Mucosa of descending colon (tissue), 3 donors: ENCODE measurements at regions of chr12 and their contacts with region 1.

Region 1: DNA sequence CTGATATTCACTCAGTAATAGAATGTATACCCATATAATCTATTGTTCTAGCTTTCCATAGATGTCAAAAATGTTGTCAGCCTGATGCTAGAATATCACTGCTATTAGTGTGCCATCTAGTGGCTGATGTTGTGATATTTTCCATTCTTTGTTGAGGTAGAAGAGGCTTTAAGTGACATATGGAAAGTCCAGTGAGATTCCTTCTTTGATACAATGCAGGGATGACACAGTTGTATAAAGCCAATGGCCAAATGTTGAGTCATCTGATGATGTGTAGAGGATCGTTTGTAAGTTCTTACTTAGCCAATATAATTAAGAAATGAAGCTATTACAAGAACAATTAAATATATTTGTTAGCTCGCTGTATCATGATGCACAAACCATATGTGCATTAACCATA is 58.1 kb upstream of the PCED1B start:
- DNase-seq: peak in 1 of 3 donors; percentile 43
- ATAC-seq: peak; percentile 62
- H3K4me3 ChIP-seq: no peak overlapping the region
- H3K4me1 ChIP-seq: no peaks in the 10 kb centered on the region
- CTCF ChIP-seq: no peak

Region 2: GRCh38 chr12:47121146-47121545 is 99.8 kb after region 1 on chr12:
- intact Hi-C with region 1: no loop called
- DNase-seq: no peak
- ATAC-seq: no peak
- H3K4me3 ChIP-seq: no peak overlapping the region
- H3K4me1 ChIP-seq: no peaks in the 10 kb centered on the region
- CTCF ChIP-seq: no peak

Region 3: DNA sequence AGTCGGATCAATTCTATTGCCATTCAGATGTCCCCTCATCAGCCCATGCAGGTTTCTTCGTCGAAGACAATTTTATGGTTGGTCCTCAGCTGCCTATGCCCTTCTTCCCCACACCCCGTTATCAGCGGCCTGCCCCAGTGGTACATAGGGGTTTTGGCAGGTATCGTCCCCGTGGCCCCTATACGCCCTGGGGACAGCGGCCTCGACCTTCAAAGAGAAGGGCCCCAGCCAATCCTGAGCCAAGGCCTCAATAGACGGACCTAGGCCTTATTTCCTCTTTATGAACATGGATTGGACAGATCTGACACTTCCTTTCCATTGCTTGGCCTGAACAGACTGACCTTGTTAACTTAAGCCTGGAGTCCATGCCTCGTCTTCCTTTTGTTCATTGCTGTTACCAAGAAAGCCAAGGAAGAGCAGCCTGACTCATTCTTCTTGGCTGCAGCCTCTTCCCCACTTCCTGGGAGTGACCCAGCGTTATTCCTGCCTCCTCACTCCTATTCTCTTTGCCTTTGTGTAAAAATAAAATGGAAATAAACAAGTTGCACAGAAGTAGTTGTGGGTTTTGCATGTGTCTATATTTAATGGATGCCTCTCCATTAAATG is 214.9 kb after region 1 on chr12:
- intact Hi-C with region 1: no loop called
- DNase-seq: no peak
- ATAC-seq: no peak
- H3K4me3 ChIP-seq: no peak overlapping the region
- H3K4me1 ChIP-seq: no peaks in the 10 kb centered on the region
- CTCF ChIP-seq: no peak

Region 4: DNA sequence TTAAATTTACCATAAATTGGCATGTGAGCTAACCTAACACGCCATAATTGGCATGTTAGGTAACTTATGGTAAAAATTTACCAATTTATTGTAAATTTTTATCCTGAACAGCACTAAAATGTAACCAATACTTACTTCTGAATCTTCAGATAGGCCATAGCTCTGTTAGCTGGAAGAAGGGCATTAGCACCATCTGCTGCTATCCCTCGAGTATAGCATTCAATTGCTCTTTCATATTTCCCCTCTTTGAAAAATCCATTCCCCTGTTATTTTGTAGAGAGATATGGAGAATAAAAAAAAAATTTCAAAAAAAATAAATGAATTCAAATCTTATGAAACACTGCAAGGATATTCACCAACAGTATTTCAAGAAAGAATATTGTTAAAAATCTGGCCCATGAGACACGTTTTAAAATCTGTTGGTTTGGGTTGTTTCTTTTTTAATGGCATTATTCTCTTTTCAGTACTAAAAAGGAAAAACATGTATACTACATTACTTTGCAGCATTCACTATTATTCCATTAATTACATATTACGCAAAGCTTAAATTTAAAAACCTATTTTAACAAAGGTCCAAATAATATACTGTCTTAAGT is 665.4 kb after region 1 on chr12:
- intact Hi-C with region 1: loop called in 1 of 2 experiments (anchors 10 kb)
- DNase-seq: no peak
- ATAC-seq: peak; percentile 55
- H3K4me3 ChIP-seq: no peak overlapping the region
- H3K4me1 ChIP-seq: no peaks in the 10 kb centered on the region
- CTCF ChIP-seq: no peak